ENCODE measurements at regions of chr9 and their contacts with region 1.

Region 1: DNA sequence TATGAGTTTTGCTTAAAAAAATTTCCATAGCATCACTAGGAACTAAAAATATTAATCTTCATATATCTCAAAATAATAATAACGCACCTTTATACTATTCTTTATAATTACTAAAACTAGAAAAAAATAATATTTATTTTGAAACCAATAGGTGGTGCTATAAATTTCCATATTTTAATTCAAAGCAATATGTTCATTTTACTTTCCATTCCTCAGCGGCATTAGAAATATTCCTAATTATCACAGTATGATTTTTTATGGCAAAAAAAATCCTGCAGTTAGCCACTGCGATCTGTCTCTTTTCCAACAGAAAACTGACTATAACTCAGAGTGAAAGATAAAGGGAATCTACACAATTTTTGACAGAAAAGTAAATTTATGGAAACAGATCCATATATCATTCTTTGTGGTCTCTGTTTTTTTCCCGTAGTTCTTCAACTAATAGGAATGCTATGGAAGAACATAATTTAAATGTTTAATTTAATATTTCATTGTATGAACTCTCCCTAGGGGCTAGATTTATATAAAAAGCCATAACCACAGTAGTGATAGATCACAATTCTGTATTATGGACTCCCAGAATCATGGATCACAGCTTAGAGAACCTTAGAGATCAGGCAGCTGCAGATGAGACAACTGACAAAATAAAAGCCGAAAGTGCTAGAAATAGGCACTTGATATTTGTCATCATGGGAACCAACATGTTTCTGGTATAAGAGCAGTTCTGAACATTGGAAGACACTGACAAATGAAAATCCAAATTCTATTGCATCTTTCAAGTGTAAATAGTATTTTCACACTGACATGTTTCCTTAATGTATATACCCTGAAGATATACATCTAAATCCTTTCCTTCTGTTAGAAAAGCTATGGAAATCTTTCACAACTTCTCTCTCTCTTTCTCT is 167.7 kb upstream of the MPDZ start:
- DNase-seq: no peak
- H3K4me3 ChIP-seq: no peak overlapping the region
- H3K27ac ChIP-seq: peak overlapping the region in 1 of 2 donors; percentile 50
- H3K4me1 ChIP-seq: peaks cover 0 to 39% (median 13%) of the 10 kb centered on the region in 4 donors
- H3K27me3 ChIP-seq: no peaks in the 10 kb centered on the region
- CTCF ChIP-seq: peak; percentile 23 to 29

Region 2: DNA sequence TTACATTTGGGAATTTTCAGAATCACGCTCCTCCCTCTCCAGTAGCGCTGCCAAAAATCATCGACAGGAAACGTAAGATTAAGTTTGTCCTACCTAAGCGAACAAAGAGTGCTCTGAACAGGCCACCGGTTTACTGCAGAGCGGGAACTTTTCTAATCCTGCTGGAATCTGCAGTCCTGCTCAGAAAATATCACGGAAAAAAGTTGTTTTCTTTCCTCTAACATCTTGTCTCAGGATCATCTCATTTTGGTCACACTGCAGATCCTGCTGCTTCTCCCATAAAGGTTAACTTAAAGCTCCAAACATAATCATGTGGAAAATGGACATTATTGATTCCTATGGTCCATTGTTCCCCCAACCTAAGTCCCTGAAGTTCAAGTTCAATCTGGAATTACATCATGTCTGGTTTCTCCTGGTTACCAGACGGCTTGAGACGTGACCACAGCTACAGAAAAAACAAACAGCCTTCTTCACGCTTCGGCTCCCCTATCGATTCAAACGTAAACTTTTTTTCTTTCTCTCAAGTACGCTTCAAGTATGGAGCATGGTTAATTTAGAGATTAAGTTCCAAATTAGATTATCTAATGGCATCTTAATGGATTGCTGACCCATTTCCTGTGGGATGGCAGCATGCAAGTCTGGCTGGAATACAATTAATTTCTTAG is 649.2 kb after region 1 on chr9:
- intact Hi-C with region 1: loop called (anchors 10 kb)
- DNase-seq: no peak
- H3K4me3 ChIP-seq: peak overlapping the region; percentile 29 to 42
- H3K27ac ChIP-seq: peak overlapping the region; percentile 72 to 74
- H3K4me1 ChIP-seq: peaks cover 0 to 53% (median 27%) of the 10 kb centered on the region in 4 donors
- H3K27me3 ChIP-seq: no peaks in the 10 kb centered on the region
- CTCF ChIP-seq: no peak

Region 3: DNA sequence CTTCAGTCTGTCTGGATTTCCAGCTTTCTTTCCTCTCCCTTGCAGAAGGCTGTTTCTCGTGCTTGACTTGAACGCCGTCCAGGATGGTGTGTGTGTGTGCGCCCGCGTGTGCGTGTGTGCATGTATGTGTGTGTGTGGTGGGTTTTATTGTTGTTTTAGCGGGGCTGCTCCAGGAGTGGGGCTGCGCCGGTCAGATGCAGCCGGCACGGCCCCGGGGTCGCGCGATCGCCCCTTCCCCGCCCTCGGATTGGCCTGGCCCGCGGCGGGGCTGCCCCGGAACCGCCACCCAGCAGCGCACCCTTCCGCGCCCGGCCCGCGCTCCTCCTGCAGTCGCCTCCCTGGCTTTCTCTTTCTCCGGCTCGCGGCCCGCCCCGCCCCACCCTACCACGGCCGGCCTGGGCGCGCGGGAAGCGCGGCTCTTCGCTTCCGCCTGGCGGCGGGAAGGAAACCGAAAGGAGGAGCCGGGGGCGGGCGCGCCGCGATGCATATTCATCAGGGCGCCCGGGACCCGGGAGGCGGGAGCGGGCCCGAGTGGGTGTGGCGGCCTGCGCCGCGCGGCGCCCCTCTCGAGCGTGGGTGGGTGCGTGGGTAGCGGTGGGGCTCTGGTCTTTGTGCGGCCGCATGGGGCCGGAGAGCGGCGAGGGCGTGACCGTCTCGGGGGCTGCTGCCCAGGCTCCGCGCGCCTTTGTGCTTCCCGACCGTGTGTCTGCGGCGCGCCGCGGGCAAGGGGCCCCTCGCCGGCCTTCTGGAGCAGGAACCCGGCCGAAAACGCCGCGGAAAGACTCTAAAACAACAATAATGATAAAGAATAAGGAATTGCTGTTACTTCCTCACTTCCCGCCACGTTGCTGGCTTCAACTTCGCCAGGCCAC is 875.3 kb after region 1 on chr9:
- intact Hi-C with region 1: loop called (anchors 10 kb)
- DNase-seq: peak; percentile 91 to 97
- H3K4me3 ChIP-seq: peak overlapping the region; percentile 87 to 94
- H3K27ac ChIP-seq: peak overlapping the region; percentile 99 to 100
- H3K4me1 ChIP-seq: peaks cover 0 to 81% (median 24%) of the 10 kb centered on the region in 4 donors
- H3K27me3 ChIP-seq: no peaks in the 10 kb centered on the region
- CTCF ChIP-seq: peak; percentile 62 to 71

Measured in tibial artery (tissue), 4 donors.